Activated naive CD4-positive, alpha-beta T cell treated with anti-CD3 and anti-CD28 coated beads for 36 hours (primary cell): ENCODE measurements at regions of chr4 and their contacts with region 1.

Region 1: GRCh38 chr4:8176547-8177399 is 18.2 kb upstream of the ABLIM2 start:
- DNase-seq: peak; percentile 63
- H3K4me3 Mint-ChIP-seq: no peak overlapping the region
- H3K27ac Mint-ChIP-seq: no peak overlapping the region
- H3K4me1 Mint-ChIP-seq: no peaks in the 10 kb centered on the region
- H3K27me3 Mint-ChIP-seq: no peaks in the 10 kb centered on the region

Region 2: DNA sequence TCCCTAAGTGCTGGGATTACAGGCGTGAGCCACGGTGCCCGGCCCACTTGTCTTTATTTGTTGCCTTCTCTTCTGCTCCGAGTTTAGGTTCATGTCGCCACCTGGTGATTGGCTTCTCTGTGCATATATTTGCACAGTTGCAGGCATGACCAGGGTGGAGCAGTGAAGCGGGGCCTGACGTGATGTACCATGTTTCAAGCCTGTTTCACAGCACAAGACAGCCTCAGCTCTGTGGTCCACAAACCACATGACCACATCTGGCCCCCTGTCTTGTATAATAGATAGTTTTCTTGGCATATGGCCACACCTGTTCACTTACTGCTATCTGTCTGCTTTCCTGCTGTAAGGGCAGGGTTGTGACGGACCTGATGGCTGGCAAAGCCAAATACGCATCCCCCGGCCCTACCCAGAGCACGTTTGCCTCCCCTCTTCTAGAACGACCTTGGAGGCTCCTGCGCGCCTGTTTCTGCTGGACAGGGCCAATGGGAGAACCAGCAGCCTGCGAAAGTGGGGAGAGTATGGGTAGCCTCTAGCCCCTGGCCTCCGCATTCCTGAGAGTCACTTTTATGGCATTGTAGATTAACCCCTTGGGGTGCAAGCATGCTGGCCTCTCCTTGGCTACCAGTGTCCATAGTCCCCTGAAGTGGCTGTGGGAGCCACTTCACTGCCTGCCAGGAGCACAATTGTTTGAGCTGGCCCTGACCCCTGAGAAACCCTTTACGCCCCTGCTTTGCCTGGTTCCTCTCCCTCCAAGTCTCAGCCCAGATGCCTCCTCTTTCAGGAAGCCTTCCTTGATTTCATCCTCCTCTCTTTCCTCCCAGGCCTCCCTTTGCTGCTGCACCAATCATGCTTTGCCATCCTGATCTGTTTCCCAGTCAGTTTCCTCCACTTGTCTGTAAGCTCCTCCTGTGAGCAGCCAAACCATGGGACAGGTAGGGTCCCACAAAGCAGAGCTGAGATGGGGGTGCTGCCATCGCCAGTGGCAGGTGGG is 16.3 kb after region 1 on chr4:
- CTCF ChIA-PET with region 1: interaction called, 11 read pairs
- intact Hi-C with region 1: loop called (anchors 1 kb)
- DNase-seq: peak; percentile 54
- H3K4me3 Mint-ChIP-seq: no peak overlapping the region
- H3K27ac Mint-ChIP-seq: no peak overlapping the region
- H3K4me1 Mint-ChIP-seq: no peaks in the 10 kb centered on the region
- H3K27me3 Mint-ChIP-seq: no peaks in the 10 kb centered on the region

Region 3: GRCh38 chr4:8236106-8236919 is 59.5 kb after region 1 on chr4:
- CTCF ChIA-PET with region 1: interaction called, 10 read pairs
- intact Hi-C with region 1: no loop called
- DNase-seq: no peak
- H3K4me3 Mint-ChIP-seq: no peak overlapping the region
- H3K27ac Mint-ChIP-seq: no peak overlapping the region
- H3K4me1 Mint-ChIP-seq: no peaks in the 10 kb centered on the region
- H3K27me3 Mint-ChIP-seq: no peaks in the 10 kb centered on the region

Region 4: GRCh38 chr4:8241895-8242696 is 65.3 kb after region 1 on chr4:
- CTCF ChIA-PET with region 1: interaction called, 10 read pairs
- intact Hi-C with region 1: loop called (anchors 2 kb)
- DNase-seq: peak; percentile 83
- H3K4me3 Mint-ChIP-seq: no peak overlapping the region
- H3K27ac Mint-ChIP-seq: no peak overlapping the region
- H3K4me1 Mint-ChIP-seq: no peaks in the 10 kb centered on the region
- H3K27me3 Mint-ChIP-seq: no peaks in the 10 kb centered on the region

Region 5: DNA sequence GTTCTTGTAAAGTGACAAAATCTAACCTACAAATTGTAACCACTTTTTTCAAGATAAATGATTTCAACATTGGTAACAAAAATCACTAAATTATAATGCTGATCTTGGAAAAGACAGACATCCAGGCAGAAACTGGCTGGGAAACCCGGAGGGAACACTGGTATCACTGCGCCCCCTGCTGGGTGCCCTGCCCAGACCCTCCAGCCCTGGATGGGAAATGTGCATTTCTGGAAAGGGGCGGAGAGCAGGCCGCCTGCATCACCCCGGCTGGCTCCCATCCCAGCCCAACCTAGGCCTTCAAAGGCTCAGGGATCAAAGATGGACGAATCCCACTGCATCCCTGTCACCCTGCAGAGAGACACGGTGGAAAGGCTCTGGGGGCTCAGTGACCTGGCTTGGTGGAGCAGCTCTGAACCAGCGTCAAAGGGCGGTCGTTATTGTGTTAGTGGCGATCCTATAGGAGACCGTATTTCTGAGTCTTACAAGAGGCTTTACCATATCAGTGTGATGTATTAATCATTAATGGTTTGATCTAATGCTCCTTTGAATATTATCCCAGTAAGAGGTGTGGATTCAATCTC is 226.5 kb after region 1 on chr4:
- CTCF ChIA-PET with region 1: interaction called, 9 read pairs
- intact Hi-C with region 1: loop called (anchors 1 kb)
- DNase-seq: peak; percentile 69
- H3K4me3 Mint-ChIP-seq: no peak overlapping the region
- H3K27ac Mint-ChIP-seq: no peak overlapping the region
- H3K4me1 Mint-ChIP-seq: no peaks in the 10 kb centered on the region
- H3K27me3 Mint-ChIP-seq: no peaks in the 10 kb centered on the region

Region 6: DNA sequence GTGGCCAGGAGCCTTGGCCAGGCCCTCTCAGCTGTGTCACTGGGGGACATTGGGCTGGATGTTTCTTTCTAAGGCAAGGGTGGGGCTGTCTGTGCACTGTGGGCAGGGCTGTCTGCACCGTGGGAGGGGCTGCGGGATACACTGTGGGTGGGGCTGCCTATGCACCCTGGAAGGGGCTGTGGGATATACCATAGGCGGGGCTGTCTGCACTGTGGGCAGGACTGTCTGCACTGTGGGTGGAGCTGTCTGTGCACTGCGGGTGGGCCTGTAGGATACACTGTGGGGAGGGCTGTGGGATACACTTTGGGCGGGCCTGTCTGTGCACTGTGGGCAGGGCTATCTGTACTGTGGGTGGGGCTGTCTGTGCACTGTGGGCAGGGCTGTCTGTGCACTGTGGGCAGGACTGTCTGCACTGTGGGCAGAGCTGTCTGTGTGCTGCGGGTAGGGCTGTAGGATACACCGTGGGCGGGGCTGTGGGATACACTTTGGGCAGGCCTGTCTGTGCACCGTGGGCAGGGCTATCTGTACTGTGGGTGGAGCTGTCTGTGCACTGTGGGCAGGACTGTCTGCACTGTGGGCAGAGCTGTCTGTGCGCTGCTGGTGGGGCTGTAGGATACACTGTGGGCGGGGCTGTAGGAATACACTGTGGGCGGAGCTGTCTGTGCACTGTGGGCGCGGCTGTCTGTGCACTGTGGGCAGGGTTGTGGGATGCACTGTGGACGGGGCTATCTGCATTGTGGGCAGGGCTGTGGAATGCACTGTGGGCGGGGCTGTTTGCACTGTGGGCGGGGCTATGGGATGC is 232.7 kb after region 1 on chr4:
- CTCF ChIA-PET with region 1: interaction called, 9 read pairs
- intact Hi-C with region 1: loop called (anchors 1 kb)
- DNase-seq: no peak
- H3K4me3 Mint-ChIP-seq: no peak overlapping the region
- H3K27ac Mint-ChIP-seq: no peak overlapping the region
- H3K4me1 Mint-ChIP-seq: peaks cover 5% of the 10 kb centered on the region
- H3K27me3 Mint-ChIP-seq: no peaks in the 10 kb centered on the region